Activated CD8-positive, alpha-beta T cell treated with anti-CD3 and anti-CD28 coated beads, Interleukin-2, amount 10 ng/mL, durations not matched to agents 7 days and 5 days (primary cell): ENCODE measurements at regions of chr12 and their contacts with region 1.

Region 1: GRCh38 chr12:6688999-6689882 is at the start of gene ZNF384:
- DNase-seq: peak; percentile 98
- ATAC-seq: peak; percentile 83
- H3K4me3 Mint-ChIP-seq: peak within 1 kb of the TSS; percentile 95
- H3K27ac Mint-ChIP-seq: peak within 1 kb of the TSS; percentile 94
- H3K4me1 Mint-ChIP-seq: peaks cover 51% of the 10 kb centered on the region
- H3K27me3 Mint-ChIP-seq: no peaks in the 10 kb centered on the region
- total RNA-seq, gene ZNF384: 71.9 to 76.4 TPM

Region 2: GRCh38 chr12:6493497-6494257 is 195.6 kb before region 1 on chr12 and contains the start of gene NCAPD2:
- CTCF ChIA-PET with region 1: no interaction called
- POLR2A ChIA-PET with region 1: interaction called, 10 read pairs
- DNase-seq: peak; percentile 98
- ATAC-seq: peak; percentile 89
- H3K4me3 Mint-ChIP-seq: peak within 1 kb of the TSS; percentile 93
- H3K27ac Mint-ChIP-seq: peak within 1 kb of the TSS; percentile 99
- H3K4me1 Mint-ChIP-seq: peaks cover 33% of the 10 kb centered on the region
- H3K27me3 Mint-ChIP-seq: no peaks in the 10 kb centered on the region
- total RNA-seq, gene NCAPD2: 195 to 201 TPM

Region 3: DNA sequence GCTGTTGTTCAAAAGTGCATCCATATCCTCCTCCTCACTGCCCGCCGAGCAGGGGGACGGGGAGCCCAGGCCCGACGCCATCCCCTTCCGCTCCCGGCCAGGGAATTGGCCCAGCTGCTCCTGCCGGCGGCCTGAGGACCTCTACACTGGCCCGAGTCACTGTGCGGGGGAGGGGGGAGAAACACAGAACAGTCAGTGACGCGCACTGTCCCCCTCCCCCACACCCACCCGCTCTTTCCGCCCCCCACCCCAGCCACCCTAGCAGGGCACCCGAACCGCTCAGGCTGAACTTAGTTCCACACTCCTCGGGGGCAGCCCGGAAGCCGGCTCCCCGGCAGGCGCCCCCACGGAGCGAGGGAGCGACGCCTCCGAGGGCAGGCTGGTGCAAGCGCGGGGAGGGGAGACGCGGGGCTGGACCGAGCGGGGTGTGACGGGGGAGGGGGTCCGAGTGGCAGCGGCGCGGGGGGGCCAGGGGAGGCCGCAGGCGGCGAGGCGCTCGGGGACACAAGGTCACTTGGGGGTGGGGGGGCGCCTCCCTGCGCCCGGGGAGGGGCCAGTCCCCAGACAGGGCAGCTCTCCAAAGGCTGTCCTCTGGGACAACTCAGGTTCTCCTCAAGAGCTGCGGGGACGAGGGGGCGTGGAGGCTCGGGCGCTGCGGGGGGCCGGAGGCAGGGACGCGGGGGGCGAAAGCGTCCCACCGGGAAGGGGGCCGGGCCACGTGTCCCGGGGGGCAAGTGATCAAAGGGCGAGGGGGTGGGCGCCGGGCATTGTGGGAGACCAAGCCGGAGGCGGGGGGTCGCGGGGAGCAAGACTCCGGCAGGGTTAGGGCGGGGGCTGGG is 82.7 kb before region 1 on chr12:
- CTCF ChIA-PET with region 1: interaction called, 9 read pairs
- POLR2A ChIA-PET with region 1: interaction called, 14 read pairs
- DNase-seq: peak; percentile 65
- ATAC-seq: peak; percentile 27
- H3K4me3 Mint-ChIP-seq: no peak overlapping the region
- H3K27ac Mint-ChIP-seq: peak overlapping the region; percentile 84
- H3K4me1 Mint-ChIP-seq: peaks cover 57% of the 10 kb centered on the region
- H3K27me3 Mint-ChIP-seq: no peaks in the 10 kb centered on the region

Region 4: GRCh38 chr12:6620137-6620884 is 68.9 kb before region 1 on chr12:
- CTCF ChIA-PET with region 1: interaction called, 33 read pairs
- POLR2A ChIA-PET with region 1: interaction called, 4 read pairs
- DNase-seq: peak; percentile 59
- ATAC-seq: peak; percentile 74
- H3K4me3 Mint-ChIP-seq: peak overlapping the region; percentile 64
- H3K27ac Mint-ChIP-seq: peak overlapping the region; percentile 64
- H3K4me1 Mint-ChIP-seq: peaks cover 27% of the 10 kb centered on the region
- H3K27me3 Mint-ChIP-seq: no peaks in the 10 kb centered on the region

Region 5: GRCh38 chr12:6723607-6724396 is 34.6 kb after region 1 on chr12 and contains the start of gene COPS7A:
- CTCF ChIA-PET with region 1: interaction called, 30 read pairs
- POLR2A ChIA-PET with region 1: interaction called, 69 read pairs
- DNase-seq: peak; percentile 100
- ATAC-seq: peak; percentile 96
- H3K4me3 Mint-ChIP-seq: peak within 1 kb of the TSS; percentile 84
- H3K27ac Mint-ChIP-seq: peak within 1 kb of the TSS; percentile 93
- H3K4me1 Mint-ChIP-seq: peaks cover 29% of the 10 kb centered on the region
- H3K27me3 Mint-ChIP-seq: no peaks in the 10 kb centered on the region
- total RNA-seq, gene COPS7A: 26.9 to 29.7 TPM

Region 6: GRCh38 chr12:6771091-6771495 is 81.9 kb after region 1 on chr12:
- CTCF ChIA-PET with region 1: interaction called, 4 read pairs
- POLR2A ChIA-PET with region 1: interaction called, 10 read pairs
- DNase-seq: no peak
- ATAC-seq: no peak
- H3K4me3 Mint-ChIP-seq: no peak overlapping the region
- H3K27ac Mint-ChIP-seq: peak overlapping the region; percentile 80
- H3K4me1 Mint-ChIP-seq: peaks cover 78% of the 10 kb centered on the region
- H3K27me3 Mint-ChIP-seq: peaks cover 6% of the 10 kb centered on the region

Region 7: GRCh38 chr12:7031306-7031705 is 342.1 kb after region 1 on chr12:
- CTCF ChIA-PET with region 1: no interaction called
- POLR2A ChIA-PET with region 1: no interaction called
- DNase-seq: no peak
- ATAC-seq: no peak
- H3K4me3 Mint-ChIP-seq: no peak overlapping the region
- H3K27ac Mint-ChIP-seq: no peak overlapping the region
- H3K4me1 Mint-ChIP-seq: no peaks in the 10 kb centered on the region
- H3K27me3 Mint-ChIP-seq: peaks cover 16% of the 10 kb centered on the region